H1 (cell line): ENCODE measurements at regions of chr17 and their contacts with region 1.

Region 1: GRCh38 chr17:3738562-3739295 is 15.0 kb downstream of the HASPIN start:
- DNase-seq: no peak
- H3K4me3 ChIP-seq: no peak overlapping the region
- H3K27ac ChIP-seq: no peak overlapping the region
- H3K4me1 ChIP-seq: peaks cover 2 to 5% (median 3%) of the 10 kb centered on the region in 4 experiments; a peak in 5 of 7 replicates
- H3K27me3 ChIP-seq: no peaks in the 10 kb centered on the region
- CTCF ChIP-seq: no peak
- EP300 ChIP-seq: no peak
- POLR2A ChIP-seq: no peak
- RAD21 ChIP-seq: no peak

Region 2: DNA sequence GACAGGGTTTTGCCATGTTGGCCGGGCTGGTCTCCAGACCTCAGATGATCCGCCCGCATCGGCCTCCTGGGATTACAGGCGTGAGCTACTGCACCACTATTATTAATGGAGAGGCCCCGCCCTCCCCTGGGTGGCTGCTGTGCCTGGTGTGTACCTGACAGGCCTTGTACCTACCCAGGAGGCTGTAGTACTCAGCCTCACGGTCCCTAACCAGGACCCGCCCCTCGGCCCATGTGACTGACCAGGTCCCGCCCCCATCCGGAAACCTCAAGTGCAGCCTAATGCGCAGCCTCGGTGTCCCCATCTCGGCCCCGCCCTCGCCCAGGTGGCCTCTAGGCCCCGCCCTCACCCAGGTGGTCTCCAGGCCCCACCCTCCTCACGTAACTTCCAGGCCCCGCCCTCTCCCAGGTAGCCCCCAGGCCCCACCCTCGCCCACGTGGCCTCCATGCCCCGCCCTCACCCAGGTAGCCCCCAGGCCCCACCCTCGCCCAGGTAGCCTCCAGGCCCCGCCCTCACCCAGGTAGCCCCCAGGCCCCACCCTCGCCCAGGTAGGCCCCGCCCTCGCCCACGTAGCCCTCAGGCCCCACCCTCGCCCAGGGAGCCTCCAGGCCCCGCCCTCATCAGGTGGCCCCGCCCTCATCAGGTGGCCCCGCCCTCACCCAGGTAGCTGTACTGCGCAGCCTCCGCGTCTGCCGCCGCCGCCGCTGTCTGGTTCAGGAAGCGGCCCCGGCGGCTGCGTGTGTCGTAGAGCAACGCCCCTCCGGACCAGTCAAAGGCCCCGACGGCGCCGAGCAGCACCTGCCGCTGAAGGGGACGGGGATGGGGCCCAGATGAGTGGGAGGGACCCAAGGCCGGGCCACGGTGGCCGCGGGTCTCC is 16.0 kb after region 1 on chr17:
- CTCF ChIA-PET with region 1: interaction called, 73 read pairs
- POLR2A ChIA-PET with region 1: interaction called, 3 read pairs
- DNase-seq: peak; percentile 99 to 100
- H3K4me3 ChIP-seq: peak overlapping the region; percentile 57 to 73 (median 66)
- H3K27ac ChIP-seq: peak overlapping the region; percentile 60; the same call in 1 of the 2 replicates
- H3K4me1 ChIP-seq: peaks cover 0 to 5% (median 3%) of the 10 kb centered on the region in 4 experiments; a peak in 4 of 7 replicates
- H3K27me3 ChIP-seq: no peaks in the 10 kb centered on the region
- CTCF ChIP-seq: no peak
- EP300 ChIP-seq: no peak
- POLR2A ChIP-seq: peak in 1 of 2 experiments; percentile 74; a peak in 2 of 3 replicates
- RAD21 ChIP-seq: no peak

Region 3: DNA sequence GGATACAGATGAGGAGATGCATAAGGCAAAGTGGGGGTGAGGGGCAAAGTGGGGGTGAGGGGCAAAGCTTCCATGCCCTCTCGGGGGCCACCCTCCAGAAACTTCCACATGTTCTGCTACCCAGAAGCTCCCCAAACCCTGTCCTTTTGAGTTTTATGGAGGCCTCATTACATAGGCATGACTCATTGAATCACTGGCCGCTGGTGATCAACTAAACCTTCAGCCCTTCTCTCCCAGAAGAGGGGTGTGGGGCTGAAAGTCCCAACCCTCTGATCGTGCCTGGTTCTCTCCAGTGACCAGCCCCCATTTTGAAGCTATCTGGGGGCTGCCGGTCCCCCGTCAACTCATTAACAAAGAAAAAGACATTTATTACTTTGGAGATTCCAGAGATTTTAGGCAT is 34.8 kb after region 1 on chr17:
- CTCF ChIA-PET with region 1: interaction called, 132 read pairs
- POLR2A ChIA-PET with region 1: interaction called, 4 read pairs
- DNase-seq: no peak
- H3K4me3 ChIP-seq: no peak overlapping the region
- H3K27ac ChIP-seq: no peak overlapping the region
- H3K4me1 ChIP-seq: peaks cover 0 to 14% (median 2%) of the 10 kb centered on the region in 4 experiments; a peak in 2 of 7 replicates
- H3K27me3 ChIP-seq: no peaks in the 10 kb centered on the region
- CTCF ChIP-seq: no peak
- EP300 ChIP-seq: no peak
- POLR2A ChIP-seq: no peak
- RAD21 ChIP-seq: no peak

Region 4: DNA sequence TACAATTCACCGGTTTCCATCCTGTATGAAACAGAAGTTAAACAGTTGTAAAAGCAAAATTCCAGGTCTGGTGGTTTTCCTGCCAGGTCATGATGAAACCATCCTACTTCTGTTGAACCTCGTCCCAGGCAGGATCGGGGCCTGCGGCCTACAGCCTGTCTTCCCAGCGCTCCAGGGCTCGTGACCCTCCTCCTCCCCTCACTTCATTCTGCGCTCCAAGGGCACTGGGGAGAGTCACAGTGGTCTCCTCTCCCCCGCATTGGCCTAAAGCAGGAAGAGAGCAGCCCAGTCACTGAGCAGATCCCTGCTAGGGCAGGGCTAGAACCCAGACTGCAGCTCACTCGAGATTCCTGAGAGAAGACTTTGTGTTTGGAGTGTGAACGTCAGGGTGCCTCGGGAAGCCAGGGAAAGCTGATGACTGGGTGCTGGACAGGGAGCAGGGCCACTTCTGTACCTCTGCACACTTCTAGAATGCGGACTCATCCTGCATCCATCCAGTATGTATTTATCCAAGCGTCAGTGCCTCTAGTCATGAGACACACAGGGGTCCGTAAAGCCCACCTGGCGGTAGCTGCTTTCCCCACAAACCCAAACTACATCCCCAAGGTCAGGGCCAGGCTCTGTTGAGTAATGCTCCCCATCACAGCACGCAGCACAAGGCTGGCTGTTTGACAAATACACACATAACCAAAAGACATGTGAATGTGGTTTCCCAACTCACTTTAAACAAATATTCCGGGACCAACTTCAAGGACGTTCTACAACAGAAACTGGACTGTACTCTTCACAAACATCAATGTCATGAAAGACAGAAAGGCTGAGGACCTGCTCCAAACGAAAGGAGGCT is 64.0 kb after region 1 on chr17:
- CTCF ChIA-PET with region 1: interaction called, 32 read pairs
- POLR2A ChIA-PET with region 1: interaction called, 9 read pairs
- DNase-seq: no peak
- H3K4me3 ChIP-seq: no peak overlapping the region
- H3K27ac ChIP-seq: no peak overlapping the region
- H3K4me1 ChIP-seq: no peaks in the 10 kb centered on the region; a peak in 1 of 7 replicates
- H3K27me3 ChIP-seq: no peaks in the 10 kb centered on the region
- CTCF ChIP-seq: no peak
- EP300 ChIP-seq: no peak
- POLR2A ChIP-seq: no peak
- RAD21 ChIP-seq: no peak

Region 5: GRCh38 chr17:3815925-3816324 is 77.2 kb after region 1 on chr17:
- CTCF ChIA-PET with region 1: interaction called, 17 read pairs
- POLR2A ChIA-PET with region 1: no interaction called
- DNase-seq: no peak
- H3K4me3 ChIP-seq: no peak overlapping the region
- H3K27ac ChIP-seq: no peak overlapping the region
- H3K4me1 ChIP-seq: no peaks in the 10 kb centered on the region
- H3K27me3 ChIP-seq: no peaks in the 10 kb centered on the region
- CTCF ChIP-seq: no peak
- EP300 ChIP-seq: no peak
- POLR2A ChIP-seq: no peak
- RAD21 ChIP-seq: no peak; a peak in 1 of 4 replicates

Region 6: DNA sequence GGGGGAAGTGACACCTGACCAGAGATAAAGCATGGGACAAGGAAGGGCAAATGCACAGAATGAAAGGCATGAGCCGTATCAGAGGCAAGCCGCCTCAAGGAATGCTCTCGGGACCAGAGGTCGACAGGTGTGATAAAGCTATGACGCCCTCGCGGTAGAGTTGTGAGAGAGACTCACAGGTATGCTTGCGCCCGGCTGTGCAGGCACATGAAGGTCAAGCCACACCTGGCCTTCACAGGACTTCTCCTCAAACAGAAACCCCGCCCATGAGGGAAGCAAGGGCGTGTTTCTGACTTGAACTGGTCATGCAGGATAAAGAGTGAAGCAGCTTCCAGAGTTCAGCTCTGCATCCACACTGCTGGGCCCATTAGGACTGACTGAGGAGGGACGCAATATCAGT is 99.5 kb after region 1 on chr17:
- CTCF ChIA-PET with region 1: interaction called, 15 read pairs
- POLR2A ChIA-PET with region 1: no interaction called
- DNase-seq: no peak
- H3K4me3 ChIP-seq: no peak overlapping the region
- H3K27ac ChIP-seq: no peak overlapping the region
- H3K4me1 ChIP-seq: no peaks in the 10 kb centered on the region
- H3K27me3 ChIP-seq: no peaks in the 10 kb centered on the region
- CTCF ChIP-seq: no peak
- EP300 ChIP-seq: no peak
- POLR2A ChIP-seq: no peak
- RAD21 ChIP-seq: no peak

Region 7: GRCh38 chr17:3865176-3865575 is 126.4 kb after region 1 on chr17:
- CTCF ChIA-PET with region 1: interaction called, 10 read pairs
- POLR2A ChIA-PET with region 1: no interaction called
- DNase-seq: no peak
- H3K4me3 ChIP-seq: no peak overlapping the region
- H3K27ac ChIP-seq: no peak overlapping the region
- H3K4me1 ChIP-seq: no peaks in the 10 kb centered on the region
- H3K27me3 ChIP-seq: no peaks in the 10 kb centered on the region
- CTCF ChIP-seq: no peak
- EP300 ChIP-seq: no peak
- POLR2A ChIP-seq: no peak
- RAD21 ChIP-seq: no peak

Region 8: GRCh38 chr17:3879186-3879585 is 140.5 kb after region 1 on chr17:
- CTCF ChIA-PET with region 1: no interaction called
- POLR2A ChIA-PET with region 1: no interaction called
- DNase-seq: no peak
- H3K4me3 ChIP-seq: no peak overlapping the region
- H3K27ac ChIP-seq: no peak overlapping the region
- H3K4me1 ChIP-seq: no peaks in the 10 kb centered on the region
- H3K27me3 ChIP-seq: no peaks in the 10 kb centered on the region
- CTCF ChIP-seq: no peak
- EP300 ChIP-seq: no peak
- POLR2A ChIP-seq: no peak
- RAD21 ChIP-seq: no peak